Activated naive CD4-positive, alpha-beta T cell treated with anti-CD3 and anti-CD28 coated beads for 36 hours (primary cell): ENCODE measurements at regions of chr11 and their contacts with region 1.

Region 1: GRCh38 chr11:130924770-130925169 is 8.5 kb upstream of the SNX19 start:
- DNase-seq: no peak
- H3K4me3 Mint-ChIP-seq: no peak overlapping the region
- H3K27ac Mint-ChIP-seq: no peak overlapping the region
- H3K4me1 Mint-ChIP-seq: no peaks in the 10 kb centered on the region
- H3K27me3 Mint-ChIP-seq: peaks cover 5% of the 10 kb centered on the region

Region 2: DNA sequence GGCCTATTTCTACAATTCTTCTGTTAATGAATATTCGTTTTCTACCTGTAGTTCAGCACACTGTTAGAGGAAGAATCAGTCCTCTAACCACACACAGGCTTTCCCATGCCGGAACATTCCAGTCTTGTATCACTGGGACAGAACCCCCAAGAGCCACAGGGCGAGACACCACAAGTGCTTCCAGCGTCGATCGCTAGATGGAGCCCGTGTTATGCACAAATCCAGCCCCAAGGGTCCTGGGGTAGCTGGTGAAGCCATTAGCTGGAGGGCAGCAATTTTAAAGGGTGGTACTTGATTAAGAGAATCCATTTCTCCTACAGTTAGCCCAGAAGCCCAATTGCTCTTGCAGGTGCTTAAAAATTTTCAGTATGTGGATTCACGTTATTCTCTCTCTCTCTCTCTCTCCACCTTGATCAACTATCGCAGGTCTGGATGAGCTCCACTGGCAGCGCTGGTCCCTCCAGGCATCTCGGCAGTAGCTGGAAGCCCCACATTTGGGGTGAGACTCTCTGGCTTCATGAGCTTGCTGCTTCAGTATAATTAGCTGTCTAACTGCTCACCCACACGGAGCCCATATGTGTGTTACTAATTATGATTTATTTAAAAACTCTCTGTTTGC is 139.7 kb after region 1 on chr11:
- CTCF ChIA-PET with region 1: no interaction called
- intact Hi-C with region 1: loop called (anchors 10 kb)
- DNase-seq: peak; percentile 46
- H3K4me3 Mint-ChIP-seq: no peak overlapping the region
- H3K27ac Mint-ChIP-seq: no peak overlapping the region
- H3K4me1 Mint-ChIP-seq: no peaks in the 10 kb centered on the region
- H3K27me3 Mint-ChIP-seq: peaks cover 8% of the 10 kb centered on the region